T-cell (primary cell): ENCODE measurements at regions of chr7 and their contacts with region 1.

Region 1: GRCh38 chr7:25259587-25260243 is 31.4 kb upstream of the NPVF start:
- DNase-seq: peak; percentile 31 to 83 (median 56)
- ATAC-seq: peak; percentile 75 to 80 (median 76)
- H3K4me3 ChIP-seq: no peak overlapping the region
- H3K4me3 Mint-ChIP-seq: peak overlapping the region in 2 of 3 donors; percentile 42 to 54
- H3K27ac ChIP-seq: no peak overlapping the region
- H3K27ac Mint-ChIP-seq: peak overlapping the region; percentile 48 to 69
- H3K4me1 ChIP-seq: peaks cover 6 to 16% of the 10 kb centered on the region in 2 experiments
- H3K4me1 Mint-ChIP-seq: peaks cover 30 to 36% (median 30%) of the 10 kb centered on the region in 3 donors
- H3K27me3 ChIP-seq: peaks cover 0 to 2% of the 10 kb centered on the region in 2 experiments
- H3K27me3 Mint-ChIP-seq: peaks cover 5 to 13% of the 10 kb centered on the region in 2 donors

Region 2: GRCh38 chr7:25389489-25390106 is 129.9 kb after region 1 on chr7:
- CTCF ChIA-PET with region 1: interaction called, 12 to 51 read pairs
- POLR2A ChIA-PET with region 1: interaction called in 1 of 2 experiments, 3 read pairs
- DNase-seq: peak in 5 of 35 experiments; percentile 1 to 67 (median 11)
- ATAC-seq: peak in 2 of 4 experiments; percentile 31 to 58
- H3K4me3 ChIP-seq: no peak overlapping the region
- H3K4me3 Mint-ChIP-seq: no peak overlapping the region
- H3K27ac ChIP-seq: no peak overlapping the region
- H3K27ac Mint-ChIP-seq: no peak overlapping the region
- H3K4me1 ChIP-seq: no peaks in the 10 kb centered on the region
- H3K4me1 Mint-ChIP-seq: peaks cover 0 to 7% (median 4%) of the 10 kb centered on the region in 3 donors
- H3K27me3 ChIP-seq: peaks cover 0 to 4% of the 10 kb centered on the region in 2 experiments
- H3K27me3 Mint-ChIP-seq: peaks cover 5 to 10% of the 10 kb centered on the region in 2 donors

Region 3: DNA sequence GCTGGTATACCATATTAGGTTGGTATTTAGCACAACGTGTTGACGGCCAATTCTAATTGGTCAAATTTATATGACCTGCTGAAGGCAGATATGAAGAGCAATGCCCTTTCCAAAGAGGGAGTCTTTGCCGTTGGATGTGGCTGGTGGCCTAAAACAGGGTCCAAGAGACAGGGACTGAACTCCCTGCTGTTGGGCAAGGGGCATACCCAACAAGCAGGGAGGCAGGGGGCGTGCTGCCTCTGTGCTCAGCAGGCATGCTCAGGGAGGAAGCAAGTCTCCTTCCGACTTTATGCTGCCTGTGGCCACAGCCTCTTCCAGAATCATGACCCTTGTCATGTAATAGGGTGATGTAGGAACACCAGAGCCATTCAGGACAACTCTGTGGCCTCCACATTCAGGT is 136.3 kb after region 1 on chr7:
- CTCF ChIA-PET with region 1: interaction called, 9 to 51 read pairs
- POLR2A ChIA-PET with region 1: no interaction called
- DNase-seq: no peak
- ATAC-seq: no peak
- H3K4me3 ChIP-seq: no peak overlapping the region
- H3K4me3 Mint-ChIP-seq: no peak overlapping the region
- H3K27ac ChIP-seq: no peak overlapping the region
- H3K27ac Mint-ChIP-seq: no peak overlapping the region
- H3K4me1 ChIP-seq: no peaks in the 10 kb centered on the region
- H3K4me1 Mint-ChIP-seq: peaks cover 0 to 2% (median 0%) of the 10 kb centered on the region in 3 donors
- H3K27me3 ChIP-seq: peaks cover 0 to 5% of the 10 kb centered on the region in 2 experiments
- H3K27me3 Mint-ChIP-seq: peaks cover 3 to 6% of the 10 kb centered on the region in 2 donors

Region 4: GRCh38 chr7:25565949-25566348 is 306.2 kb after region 1 on chr7:
- CTCF ChIA-PET with region 1: interaction called, 27 to 56 read pairs
- POLR2A ChIA-PET with region 1: no interaction called
- DNase-seq: peak; percentile 19 to 84 (median 59)
- ATAC-seq: peak in 2 of 4 experiments; percentile 19 to 66
- H3K4me3 ChIP-seq: no peak overlapping the region
- H3K4me3 Mint-ChIP-seq: no peak overlapping the region
- H3K27ac ChIP-seq: no peak overlapping the region
- H3K27ac Mint-ChIP-seq: no peak overlapping the region
- H3K4me1 ChIP-seq: no peaks in the 10 kb centered on the region
- H3K4me1 Mint-ChIP-seq: peaks cover 4 to 8% (median 4%) of the 10 kb centered on the region in 3 donors
- H3K27me3 ChIP-seq: no peaks in the 10 kb centered on the region
- H3K27me3 Mint-ChIP-seq: peaks cover 4% of the 10 kb centered on the region in 2 donors